MCF 10A (cell line): ENCODE measurements at regions of chr17 and their contacts with region 1.

Region 1: DNA sequence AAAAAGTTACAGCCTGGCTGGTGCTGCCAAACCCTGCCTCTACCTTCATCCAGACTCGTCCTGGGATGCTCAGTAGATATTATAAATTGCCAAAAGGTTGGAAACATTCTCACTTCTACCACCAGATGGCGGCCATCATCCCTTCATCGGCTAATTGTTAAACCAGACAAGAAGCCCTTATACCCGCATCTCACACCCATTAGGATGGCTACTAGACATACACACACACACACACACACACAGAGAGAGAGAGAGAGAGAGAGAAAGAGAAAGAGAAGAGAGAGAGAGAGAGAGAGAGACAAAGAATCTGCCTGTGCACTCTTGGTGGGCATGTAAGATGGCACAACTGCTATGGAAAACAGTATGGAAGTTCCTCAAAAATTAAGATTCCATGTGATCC is 15.0 kb upstream of the SCIMP start:
- DNase-seq: peak; percentile 86
- H3K4me3 Mint-ChIP-seq: no peak overlapping the region
- H3K27ac Mint-ChIP-seq: no peak overlapping the region
- H3K4me1 Mint-ChIP-seq: no peaks in the 10 kb centered on the region
- H3K27me3 Mint-ChIP-seq: no peaks in the 10 kb centered on the region
- CTCF ChIP-seq: peak; percentile 37

Region 2: GRCh38 chr17:5304636-5305035 is 55.0 kb after region 1 on chr17:
- CTCF ChIA-PET with region 1: interaction called, 5 read pairs
- POLR2A ChIA-PET with region 1: no interaction called
- intact Hi-C with region 1: loop called (anchors 1 kb)
- DNase-seq: no peak
- H3K4me3 Mint-ChIP-seq: no peak overlapping the region
- H3K27ac Mint-ChIP-seq: no peak overlapping the region
- H3K4me1 Mint-ChIP-seq: peaks cover 7% of the 10 kb centered on the region
- H3K27me3 Mint-ChIP-seq: no peaks in the 10 kb centered on the region
- CTCF ChIP-seq: no peak

Region 3: DNA sequence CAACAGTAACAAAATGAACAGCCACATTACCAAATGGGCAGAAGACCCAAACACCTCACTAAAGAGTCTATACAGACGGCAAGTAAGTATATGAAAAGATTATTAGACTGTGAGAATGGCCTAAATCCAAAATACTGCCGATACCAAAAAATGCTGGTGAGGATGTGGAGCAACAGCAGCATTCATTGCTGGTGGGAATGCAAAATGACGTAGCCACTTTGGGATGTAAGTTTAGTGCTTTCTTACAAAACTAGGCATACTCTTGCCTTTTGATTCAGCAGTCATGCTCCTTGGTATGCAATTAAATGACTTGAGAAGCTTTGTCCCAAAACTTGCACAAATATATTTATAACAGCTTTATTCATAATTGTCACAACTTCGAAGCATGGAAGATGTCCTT is 76.2 kb after region 1 on chr17:
- CTCF ChIA-PET with region 1: no interaction called
- POLR2A ChIA-PET with region 1: no interaction called
- intact Hi-C with region 1: no loop called
- DNase-seq: no peak
- H3K4me3 Mint-ChIP-seq: no peak overlapping the region
- H3K27ac Mint-ChIP-seq: no peak overlapping the region
- H3K4me1 Mint-ChIP-seq: no peaks in the 10 kb centered on the region
- H3K27me3 Mint-ChIP-seq: no peaks in the 10 kb centered on the region
- CTCF ChIP-seq: no peak

Region 4: DNA sequence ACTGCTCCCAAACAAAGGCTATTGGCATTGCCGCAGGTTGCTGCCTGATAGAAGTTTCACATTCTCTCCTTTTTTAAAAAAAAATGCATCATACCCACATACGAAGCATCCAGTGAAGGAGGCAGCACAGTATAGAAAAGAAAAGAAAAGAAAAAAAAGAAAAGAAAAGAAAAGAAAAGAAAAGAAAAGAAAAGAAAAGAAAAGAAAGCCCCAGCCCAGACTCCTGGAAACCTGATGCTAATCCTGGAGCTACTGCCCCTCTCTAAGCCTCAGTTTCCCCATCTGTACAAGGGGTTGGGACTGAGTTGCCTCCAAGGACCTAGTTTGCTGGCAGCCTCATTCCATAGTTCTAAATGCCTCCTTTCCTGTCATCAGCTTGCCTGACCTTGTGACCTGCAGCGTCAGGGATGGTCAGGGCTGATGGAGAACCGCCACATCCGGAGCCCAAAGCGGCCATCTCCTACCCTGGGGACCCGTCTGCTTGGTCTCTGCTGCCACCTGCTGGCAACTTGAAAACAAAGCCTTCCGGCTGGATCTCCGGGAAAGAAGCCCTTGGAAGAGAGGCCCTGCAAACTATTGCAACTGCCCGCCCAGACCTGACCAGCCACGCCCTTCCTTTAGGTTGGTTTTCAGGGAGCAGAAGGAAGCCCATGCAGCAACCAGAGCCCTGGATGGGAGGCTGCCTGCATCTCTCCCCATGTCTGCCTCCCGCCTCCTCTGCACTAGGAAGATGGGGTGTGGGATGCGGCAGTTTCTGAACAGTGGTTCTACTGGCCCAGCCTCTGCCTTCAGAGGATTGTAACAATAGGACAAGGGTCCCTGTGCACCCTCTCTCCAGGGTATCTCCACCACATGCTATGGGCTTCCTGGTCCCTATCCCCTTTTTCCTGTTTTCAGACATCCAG is 1172.3 kb after region 1 on chr17:
- CTCF ChIA-PET with region 1: interaction called, 6 read pairs
- POLR2A ChIA-PET with region 1: no interaction called
- intact Hi-C with region 1: loop called (anchors 5 kb)
- DNase-seq: peak; percentile 83
- H3K4me3 Mint-ChIP-seq: no peak overlapping the region
- H3K27ac Mint-ChIP-seq: no peak overlapping the region
- H3K4me1 Mint-ChIP-seq: no peaks in the 10 kb centered on the region
- H3K27me3 Mint-ChIP-seq: no peaks in the 10 kb centered on the region
- CTCF ChIP-seq: peak; percentile 95